Activated CD8-positive, alpha-beta T cell treated with anti-CD3 and anti-CD28 coated beads for 36 hours (primary cell): ENCODE measurements at regions of chr11 and their contacts with region 1.

Region 1: GRCh38 chr11:46332568-46333393 is 14.5 kb upstream of the DGKZ start:
- DNase-seq: peak; percentile 71
- ATAC-seq: peak; percentile 31
- H3K4me3 Mint-ChIP-seq: peak overlapping the region; percentile 67
- H3K27ac Mint-ChIP-seq: peak overlapping the region; percentile 16
- H3K4me1 Mint-ChIP-seq: peaks cover 45% of the 10 kb centered on the region
- H3K27me3 Mint-ChIP-seq: no peaks in the 10 kb centered on the region
- CTCF ChIP-seq: no peak

Region 2: GRCh38 chr11:46315033-46315738 is 17.6 kb before region 1 on chr11:
- CTCF ChIA-PET with region 1: interaction called, 24 read pairs
- POLR2A ChIA-PET with region 1: interaction called, 11 read pairs
- intact Hi-C with region 1: no loop called
- DNase-seq: peak; percentile 90
- ATAC-seq: peak; percentile 93
- H3K4me3 Mint-ChIP-seq: no peak overlapping the region
- H3K27ac Mint-ChIP-seq: no peak overlapping the region
- H3K4me1 Mint-ChIP-seq: peaks cover 14% of the 10 kb centered on the region
- H3K27me3 Mint-ChIP-seq: no peaks in the 10 kb centered on the region
- CTCF ChIP-seq: peak; percentile 97

Region 3: GRCh38 chr11:46322759-46323158 is 10.0 kb before region 1 on chr11:
- CTCF ChIA-PET with region 1: interaction called, 7 read pairs
- POLR2A ChIA-PET with region 1: interaction called, 11 read pairs
- intact Hi-C with region 1: no loop called
- DNase-seq: peak; percentile 50
- ATAC-seq: peak; percentile 53
- H3K4me3 Mint-ChIP-seq: no peak overlapping the region
- H3K27ac Mint-ChIP-seq: no peak overlapping the region
- H3K4me1 Mint-ChIP-seq: peaks cover 11% of the 10 kb centered on the region
- H3K27me3 Mint-ChIP-seq: no peaks in the 10 kb centered on the region
- CTCF ChIP-seq: no peak

Region 4: DNA sequence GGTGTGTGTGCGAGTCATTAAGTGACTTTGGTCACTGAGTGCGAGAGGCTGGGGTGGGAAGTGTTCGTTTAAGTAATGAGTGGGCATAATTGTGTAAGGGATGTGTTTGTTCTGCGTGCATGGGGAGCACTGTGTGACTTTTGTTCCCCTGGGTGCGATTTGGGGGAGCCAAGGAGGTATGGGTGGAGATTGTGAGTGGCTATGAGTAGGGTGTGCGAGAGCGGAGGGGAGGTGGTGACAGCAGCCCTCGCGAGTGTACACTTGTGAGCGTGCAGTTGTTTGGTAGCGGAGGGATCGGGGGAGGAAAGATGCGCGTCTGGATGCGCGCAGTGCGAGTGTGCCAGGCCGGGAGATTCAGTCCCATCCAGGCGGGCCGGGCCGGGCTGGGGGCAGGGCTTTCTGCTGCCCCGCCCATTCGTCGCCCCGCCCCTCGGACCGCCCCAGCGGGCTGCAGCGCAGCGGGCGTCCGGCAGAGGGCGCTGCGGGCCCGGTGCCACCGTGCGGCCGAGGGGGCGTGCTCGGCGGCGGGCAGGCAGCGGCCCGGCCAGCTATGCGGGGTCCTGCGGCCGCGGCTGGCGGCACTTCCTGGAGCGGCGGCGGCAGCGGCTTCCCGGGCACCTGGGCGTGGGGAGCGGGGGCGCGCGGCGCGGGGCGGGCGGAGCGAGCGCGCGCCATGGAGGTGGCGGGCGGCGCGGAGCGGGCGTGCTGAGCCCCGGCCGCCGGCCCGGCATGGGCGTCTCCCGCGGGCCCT is 14.3 kb after region 1 on chr11 and contains the start of gene DGKZ:
- CTCF ChIA-PET with region 1: interaction called, 71 read pairs
- POLR2A ChIA-PET with region 1: interaction called, 24 read pairs
- intact Hi-C with region 1: no loop called
- DNase-seq: peak; percentile 85
- ATAC-seq: peak; percentile 78
- H3K4me3 Mint-ChIP-seq: peak within 1 kb of the TSS; percentile 89
- H3K27ac Mint-ChIP-seq: peak within 1 kb of the TSS; percentile 94
- H3K4me1 Mint-ChIP-seq: peaks cover 71% of the 10 kb centered on the region
- H3K27me3 Mint-ChIP-seq: no peaks in the 10 kb centered on the region
- CTCF ChIP-seq: peak; percentile 72
- total RNA-seq, gene DGKZ: 94.4 to 94.9 TPM